Mammary epithelial cell (primary cell): ENCODE measurements at regions of chr21 and their contacts with region 1.

Region 1: GRCh38 chr21:33089398-33090119 is 19.6 kb downstream of the OLIG1 start:
- DNase-seq: no peak
- H3K4me3 ChIP-seq: no peak overlapping the region
- H3K27ac ChIP-seq: no peak overlapping the region
- H3K4me1 ChIP-seq: no peaks in the 10 kb centered on the region
- H3K27me3 ChIP-seq: peaks cover 2% of the 10 kb centered on the region
- CTCF ChIP-seq: no peak

Region 2: DNA sequence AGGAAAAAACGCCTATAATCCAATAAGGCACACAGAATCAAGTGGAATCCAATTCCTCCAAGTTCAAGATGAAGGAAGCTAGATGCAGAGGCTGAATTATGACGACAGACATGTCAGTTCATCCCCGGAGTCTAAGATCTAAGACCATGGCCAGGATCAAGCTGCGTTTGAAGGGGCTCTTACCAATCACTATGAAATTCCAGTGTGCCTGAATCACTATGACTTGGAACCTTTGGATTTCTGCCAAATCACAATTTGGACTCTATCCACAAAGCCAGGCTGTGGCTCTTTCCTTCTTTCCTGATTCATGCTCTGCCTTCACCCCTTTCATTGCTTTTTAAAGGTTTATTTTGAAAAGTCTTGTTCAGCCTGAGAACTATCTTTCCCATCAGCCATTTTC is 46.7 kb before region 1 on chr21:
- CTCF ChIA-PET with region 1: no interaction called
- dilution Hi-C with region 1: loop called (anchors 5 kb)
- in situ Hi-C with region 1: no loop called
- intact Hi-C with region 1: no loop called
- DNase-seq: peak; percentile 56
- H3K4me3 ChIP-seq: no peak overlapping the region
- H3K27ac ChIP-seq: no peak overlapping the region
- H3K4me1 ChIP-seq: peaks cover 13% of the 10 kb centered on the region
- H3K27me3 ChIP-seq: no peaks in the 10 kb centered on the region
- CTCF ChIP-seq: no peak

Region 3: DNA sequence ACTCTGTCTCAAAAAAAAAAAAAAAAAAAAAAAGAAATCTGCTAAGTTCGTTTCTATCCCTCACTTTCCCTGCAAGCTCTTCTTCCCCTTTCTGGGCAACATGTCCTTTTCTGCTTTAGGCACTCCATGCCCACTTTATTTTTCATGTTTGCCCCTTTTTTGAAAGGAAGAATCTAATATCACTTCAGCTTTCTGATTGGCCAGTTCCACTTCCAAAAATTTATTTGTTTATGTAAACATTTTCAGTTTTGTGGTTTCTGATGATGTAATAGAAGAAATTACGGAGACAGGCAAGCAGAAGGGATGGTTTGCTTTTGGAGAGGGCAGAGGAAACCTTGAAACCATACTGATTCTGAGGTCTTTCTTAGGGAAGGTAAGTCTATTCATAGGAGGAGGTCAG is 250.4 kb after region 1 on chr21:
- CTCF ChIA-PET with region 1: no interaction called
- dilution Hi-C with region 1: no loop called
- in situ Hi-C with region 1: no loop called
- intact Hi-C with region 1: no loop called
- DNase-seq: no peak
- H3K4me3 ChIP-seq: no peak overlapping the region
- H3K27ac ChIP-seq: no peak overlapping the region
- H3K4me1 ChIP-seq: peaks cover 2% of the 10 kb centered on the region
- H3K27me3 ChIP-seq: no peaks in the 10 kb centered on the region
- CTCF ChIP-seq: no peak